HCT116 (cell line): ENCODE measurements at regions of chr15 and their contacts with region 1.

Region 1: DNA sequence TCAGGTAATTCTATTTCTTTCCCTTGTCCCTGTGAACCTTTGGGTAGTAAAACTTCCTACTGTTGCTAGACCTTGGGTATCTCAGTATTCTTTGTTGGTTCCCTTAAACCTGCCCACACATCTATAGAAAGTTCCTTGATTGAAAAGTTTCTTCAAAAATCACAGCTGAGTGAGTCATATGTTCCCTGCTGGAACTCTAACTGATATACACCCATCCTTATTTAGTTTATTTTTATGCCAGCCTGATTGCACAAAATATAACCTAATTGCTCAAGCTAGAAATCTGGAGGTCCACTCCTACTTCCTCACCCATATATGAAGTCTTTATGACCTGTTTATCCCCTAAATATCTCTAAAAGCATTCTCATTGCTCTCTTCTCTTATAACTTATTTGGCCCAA is 13.7 kb upstream of the GJD2 start:
- DNase-seq: no peak
- ATAC-seq: no peak
- H3K4me3 ChIP-seq: no peak overlapping the region
- H3K27ac ChIP-seq: no peak overlapping the region
- H3K4me1 ChIP-seq: no peaks in the 10 kb centered on the region
- H3K27me3 ChIP-seq: peaks cover 63% of the 10 kb centered on the region
- CTCF ChIP-seq: no peak
- POLR2A ChIP-seq: no peak
- RAD21 ChIP-seq: no peak

Region 2: DNA sequence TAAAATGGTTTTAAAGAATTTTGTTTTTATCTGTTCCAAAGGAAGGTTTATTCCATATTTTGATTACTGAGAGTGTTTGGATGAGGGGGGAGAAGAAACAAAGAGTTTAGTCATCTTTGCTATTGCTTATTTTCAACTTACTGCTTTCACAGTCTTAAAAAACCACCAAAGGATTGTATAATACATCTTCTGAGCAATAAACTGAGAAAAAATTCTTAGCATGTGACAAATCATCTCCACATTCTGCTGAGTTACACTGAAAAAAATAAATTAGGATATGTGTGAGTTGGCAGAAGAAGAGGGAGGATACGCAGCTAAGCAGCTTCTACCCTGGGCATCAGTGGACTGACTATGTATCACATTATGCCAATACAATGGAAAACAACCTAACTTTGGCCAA is 50.0 kb after region 1 on chr15:
- CTCF ChIA-PET with region 1: no interaction called
- POLR2A ChIA-PET with region 1: no interaction called
- RAD21 ChIA-PET with region 1: no interaction called
- intact Hi-C with region 1: loop called (anchors 5 kb)
- DNase-seq: no peak
- ATAC-seq: no peak
- H3K4me3 ChIP-seq: no peak overlapping the region
- H3K27ac ChIP-seq: no peak overlapping the region
- H3K4me1 ChIP-seq: no peaks in the 10 kb centered on the region
- H3K27me3 ChIP-seq: no peaks in the 10 kb centered on the region; the same call in 1 of the 2 replicates
- CTCF ChIP-seq: no peak
- POLR2A ChIP-seq: no peak
- RAD21 ChIP-seq: no peak

Region 3: GRCh38 chr15:34914317-34914716 is 145.8 kb after region 1 on chr15:
- CTCF ChIA-PET with region 1: no interaction called
- POLR2A ChIA-PET with region 1: no interaction called
- RAD21 ChIA-PET with region 1: no interaction called
- intact Hi-C with region 1: no loop called
- DNase-seq: no peak
- ATAC-seq: no peak
- H3K4me3 ChIP-seq: no peak overlapping the region
- H3K27ac ChIP-seq: no peak overlapping the region
- H3K4me1 ChIP-seq: no peaks in the 10 kb centered on the region
- H3K27me3 ChIP-seq: no peaks in the 10 kb centered on the region
- CTCF ChIP-seq: no peak
- POLR2A ChIP-seq: no peak
- RAD21 ChIP-seq: no peak